K562 (cell line): ENCODE measurements at regions of chr10 and their contacts with region 1.

Region 1: DNA sequence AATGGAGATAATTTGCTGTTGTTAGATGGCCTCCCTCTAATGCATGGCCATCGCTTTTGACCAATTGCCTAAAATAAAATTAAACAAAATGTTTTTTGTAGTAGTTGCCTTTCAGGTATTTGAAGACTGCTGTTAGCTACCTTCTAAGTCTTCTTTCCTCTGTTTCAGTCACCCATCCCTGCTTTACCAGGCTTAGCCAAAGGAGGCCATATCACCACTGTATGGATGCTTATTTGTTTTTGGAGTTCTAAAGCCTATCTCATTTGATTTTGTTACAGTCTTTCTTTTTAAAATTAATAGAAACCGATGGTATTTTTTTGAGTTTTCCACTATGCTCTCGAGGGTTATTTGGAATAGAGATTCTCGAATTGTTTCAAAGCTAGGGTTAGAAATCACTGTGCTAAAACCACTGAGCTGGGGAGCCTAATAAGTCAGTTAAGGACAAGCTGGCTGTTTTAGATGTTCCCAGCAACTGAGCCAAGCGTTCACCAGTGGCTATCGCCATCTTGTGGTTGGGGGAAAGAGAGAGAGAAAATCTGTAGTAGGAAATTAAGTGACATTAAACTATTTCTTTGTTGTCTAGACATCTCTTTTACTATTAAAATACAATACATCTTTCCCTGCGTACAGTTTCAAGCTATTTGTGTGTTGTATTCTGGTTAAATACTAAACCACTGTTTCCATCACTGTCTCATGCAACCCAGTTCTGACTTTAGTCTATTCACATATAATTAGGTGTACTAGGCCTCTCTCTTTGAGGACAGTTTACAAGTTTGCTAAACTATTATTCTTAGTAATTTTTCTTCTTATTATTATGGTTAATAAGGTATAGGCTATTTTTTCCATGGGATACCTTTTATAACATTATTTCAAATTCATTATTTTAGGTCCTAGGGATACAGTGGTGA is 52.2 kb downstream of the GPR158 start:
- DNase-seq: peak; percentile 8 to 63 (median 15)
- ATAC-seq: peak; percentile 80
- H3K4me3 ChIP-seq: no peak overlapping the region
- H3K27ac ChIP-seq: no peak overlapping the region
- H3K4me1 ChIP-seq: no peaks in the 10 kb centered on the region
- H3K27me3 ChIP-seq: no peaks in the 10 kb centered on the region
- CTCF ChIP-seq: peak; percentile 67 to 86 (median 70)
- EP300 ChIP-seq: no peak
- POLR2A ChIP-seq: no peak
- RAD21 ChIP-seq: peak; percentile 86 to 93

Region 2: DNA sequence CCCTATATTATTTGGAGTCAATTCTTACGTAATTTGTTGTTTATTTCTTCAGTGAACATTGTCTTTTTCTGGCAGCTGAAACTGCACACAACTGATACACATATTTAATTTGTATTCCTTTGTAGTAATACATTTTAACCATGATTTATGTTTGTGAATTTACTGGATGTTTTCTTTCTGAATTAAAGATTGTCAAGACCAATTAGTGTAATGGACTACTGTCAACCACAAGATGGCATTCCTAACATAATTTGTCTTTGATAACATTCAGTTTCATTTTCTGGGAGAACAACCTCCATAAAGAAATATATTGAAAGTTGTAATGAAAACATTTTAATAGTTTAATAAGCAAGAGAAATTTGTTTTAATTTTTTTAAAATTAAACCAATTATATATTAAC is 200.6 kb before region 1 on chr10:
- CTCF ChIA-PET with region 1: interaction called, 4 read pairs
- POLR2A ChIA-PET with region 1: no interaction called
- in situ Hi-C with region 1: no loop called
- intact Hi-C with region 1: loop called (anchors 5 kb)
- DNase-seq: peak in 1 of 4 experiments; percentile 14
- ATAC-seq: no peak
- H3K4me3 ChIP-seq: no peak overlapping the region
- H3K27ac ChIP-seq: no peak overlapping the region
- H3K4me1 ChIP-seq: no peaks in the 10 kb centered on the region
- H3K27me3 ChIP-seq: no peaks in the 10 kb centered on the region
- CTCF ChIP-seq: peak in 2 of 3 experiments; percentile 20 to 66; a peak in 3 of 6 replicates
- EP300 ChIP-seq: no peak
- POLR2A ChIP-seq: no peak
- RAD21 ChIP-seq: peak; percentile 56 to 77

Region 3: GRCh38 chr10:25206693-25207414 is 20.2 kb before region 1 on chr10:
- CTCF ChIA-PET with region 1: no interaction called
- POLR2A ChIA-PET with region 1: no interaction called
- in situ Hi-C with region 1: no loop called
- intact Hi-C with region 1: no loop called
- DNase-seq: no peak
- ATAC-seq: no peak
- H3K4me3 ChIP-seq: no peak overlapping the region
- H3K27ac ChIP-seq: no peak overlapping the region
- H3K4me1 ChIP-seq: no peaks in the 10 kb centered on the region
- H3K27me3 ChIP-seq: no peaks in the 10 kb centered on the region
- CTCF ChIP-seq: no peak
- EP300 ChIP-seq: no peak
- POLR2A ChIP-seq: no peak
- RAD21 ChIP-seq: no peak

Region 4: DNA sequence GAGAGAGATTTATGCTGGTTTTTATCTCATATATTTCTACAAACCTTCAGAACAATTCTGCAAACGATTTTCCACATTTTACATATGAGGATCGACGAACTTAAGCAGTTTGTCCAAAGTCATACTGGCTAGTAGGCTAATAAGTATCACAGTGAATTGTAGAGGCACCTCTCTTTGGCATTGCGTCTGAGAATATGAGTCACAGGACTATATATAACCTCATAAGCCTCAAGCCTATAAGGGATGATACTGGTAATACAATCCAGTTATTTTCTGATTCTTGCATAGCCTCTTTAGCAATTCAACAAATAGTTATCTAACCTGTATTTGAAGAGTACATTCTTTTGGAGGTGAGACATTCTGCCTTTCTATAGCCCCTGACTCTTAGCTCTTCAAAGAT is 77.6 kb after region 1 on chr10:
- CTCF ChIA-PET with region 1: no interaction called
- POLR2A ChIA-PET with region 1: no interaction called
- in situ Hi-C with region 1: no loop called
- intact Hi-C with region 1: no loop called
- DNase-seq: no peak
- ATAC-seq: no peak
- H3K4me3 ChIP-seq: no peak overlapping the region
- H3K27ac ChIP-seq: no peak overlapping the region
- H3K4me1 ChIP-seq: no peaks in the 10 kb centered on the region
- H3K27me3 ChIP-seq: no peaks in the 10 kb centered on the region
- CTCF ChIP-seq: no peak
- EP300 ChIP-seq: no peak
- POLR2A ChIP-seq: no peak
- RAD21 ChIP-seq: no peak

Region 5: DNA sequence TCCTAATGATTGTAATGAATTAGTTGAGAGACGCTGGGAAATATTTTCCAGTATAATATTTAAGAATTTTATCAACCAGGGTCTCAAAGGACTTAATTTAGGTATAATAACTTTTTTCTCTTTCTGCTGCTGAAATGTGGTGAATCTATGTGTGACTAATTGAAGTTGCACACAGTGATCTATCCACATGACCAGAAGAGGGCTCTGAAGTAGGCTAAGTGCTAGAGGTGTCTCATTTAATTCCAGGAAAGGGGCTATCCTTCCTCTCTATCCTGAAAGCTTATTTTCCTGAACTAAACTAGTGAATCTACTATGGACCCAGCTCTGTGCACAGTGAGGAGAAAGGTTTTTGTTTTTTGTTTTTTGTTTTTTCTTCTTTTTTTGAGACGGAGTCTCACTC is 412.6 kb after region 1 on chr10:
- CTCF ChIA-PET with region 1: no interaction called
- POLR2A ChIA-PET with region 1: no interaction called
- in situ Hi-C with region 1: no loop called
- intact Hi-C with region 1: loop called (anchors 10 kb)
- DNase-seq: peak in 2 of 4 experiments; percentile 19 to 21
- ATAC-seq: peak; percentile 86
- H3K4me3 ChIP-seq: no peak overlapping the region
- H3K27ac ChIP-seq: no peak overlapping the region
- H3K4me1 ChIP-seq: no peaks in the 10 kb centered on the region
- H3K27me3 ChIP-seq: no peaks in the 10 kb centered on the region
- CTCF ChIP-seq: peak in 2 of 3 experiments; percentile 11 to 38; a peak in 3 of 6 replicates
- EP300 ChIP-seq: no peak
- POLR2A ChIP-seq: no peak
- RAD21 ChIP-seq: peak; percentile 25 to 44; a peak in 2 of 4 replicates